Naive thymus-derived CD4-positive, alpha-beta T cell (primary cell): ENCODE measurements at regions of chr1 and their contacts with region 1.

Region 1: DNA sequence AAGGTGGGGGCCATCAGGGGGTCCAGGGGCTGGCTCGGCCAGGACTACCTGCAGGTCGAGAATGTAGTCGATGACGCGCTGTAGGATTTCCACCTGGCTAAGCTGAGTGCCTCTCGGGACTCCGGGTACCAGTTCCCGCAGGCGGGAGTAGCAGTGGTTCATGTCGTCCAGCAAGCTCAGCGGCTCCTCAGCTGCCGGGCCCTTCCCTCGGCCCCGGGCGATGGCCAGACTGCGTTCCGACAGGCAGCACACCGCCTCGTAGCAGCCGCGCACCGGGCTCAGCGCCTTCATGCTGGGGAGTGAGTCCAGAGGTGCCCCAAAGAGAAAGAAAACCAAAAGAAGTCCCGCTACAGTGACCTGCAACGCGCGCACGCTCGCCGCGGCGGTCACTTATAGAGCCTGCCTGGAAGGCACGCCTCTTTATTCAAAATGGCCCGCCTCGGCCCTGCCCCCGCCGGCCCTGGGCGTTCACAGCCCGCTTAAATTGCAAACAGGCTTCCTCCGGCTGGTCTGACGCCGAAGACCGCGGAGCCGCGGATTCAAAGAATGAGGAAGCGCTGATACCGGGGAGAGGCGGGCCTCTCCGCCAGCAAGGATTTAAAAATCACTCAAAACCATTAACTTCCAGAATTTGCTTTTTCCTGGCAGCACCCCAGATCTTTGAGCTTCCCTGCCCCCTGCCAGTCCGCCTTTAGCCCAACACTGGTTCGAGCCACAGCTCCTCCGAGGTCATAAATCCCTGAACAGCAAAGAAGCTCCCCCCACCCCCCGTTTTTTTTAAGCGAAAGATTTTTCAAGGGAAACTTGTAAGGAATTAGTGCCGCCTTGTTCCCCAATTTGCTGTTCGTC is at the start of gene ID3:
- DNase-seq: peak; percentile 70 to 96 (median 86)
- ATAC-seq: peak; percentile 77
- H3K4me3 ChIP-seq: peak within 1 kb of the TSS; percentile 94
- H3K4me3 Mint-ChIP-seq: peak within 1 kb of the TSS; percentile 85 to 98 (median 93)
- H3K27ac ChIP-seq: peak within 1 kb of the TSS; percentile 91
- H3K27ac Mint-ChIP-seq: peak within 1 kb of the TSS; percentile 85 to 98 (median 91)
- H3K4me1 ChIP-seq: peaks cover 16 to 41% of the 10 kb centered on the region in 2 donors
- H3K4me1 Mint-ChIP-seq: peaks cover 40 to 80% (median 74%) of the 10 kb centered on the region in 7 donors
- H3K27me3 ChIP-seq: no peaks in the 10 kb centered on the region
- H3K27me3 Mint-ChIP-seq: peaks cover 0 to 46% (median 0%) of the 10 kb centered on the region in 5 donors
- total RNA-seq, gene ID3: 14.8 to 89.4 (median 34.1) TPM

Region 2: DNA sequence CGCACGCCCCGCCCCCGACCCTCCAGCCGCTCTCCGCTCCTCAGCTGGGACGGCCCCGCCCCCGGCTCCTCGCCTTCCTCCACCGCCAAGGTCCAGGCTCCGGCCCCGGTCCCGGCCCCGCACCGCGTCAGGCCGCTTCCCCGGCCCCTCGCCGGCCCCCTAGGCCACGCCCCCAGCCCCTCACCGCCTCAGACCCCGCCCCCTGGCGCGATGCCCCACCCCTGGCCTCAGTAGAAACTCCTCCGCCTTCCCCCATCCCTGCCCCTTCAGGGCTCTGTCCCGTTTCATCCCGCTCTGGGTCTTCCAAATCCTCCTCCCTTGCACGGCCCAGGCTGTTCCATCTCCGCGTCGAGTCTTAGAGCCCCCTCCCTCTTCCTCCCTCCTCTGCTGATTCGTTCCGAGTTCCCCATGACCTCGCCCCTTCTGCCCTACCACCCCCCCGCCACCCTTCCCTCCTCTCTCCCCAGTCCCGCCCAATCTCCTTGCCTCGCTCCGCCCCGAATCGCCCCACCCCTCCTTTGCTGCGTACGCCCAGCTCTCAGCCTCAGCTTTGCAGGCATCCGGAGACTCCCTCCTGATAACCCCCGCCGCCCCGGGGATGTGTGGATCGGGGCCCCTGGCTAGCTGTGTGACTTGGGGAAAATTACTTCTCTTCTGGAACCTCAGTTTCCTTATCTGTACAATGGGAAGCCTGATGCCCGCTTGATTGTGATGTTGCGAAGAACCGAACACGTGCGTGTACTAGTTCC is 74.9 kb before region 1 on chr1:
- CTCF ChIA-PET with region 1: no interaction called
- POLR2A ChIA-PET with region 1: interaction called, 4 read pairs
- intact Hi-C with region 1: loop called in 1 of 2 experiments (anchors 1 kb)
- DNase-seq: peak; percentile 76 to 92 (median 90)
- ATAC-seq: peak; percentile 94
- H3K4me3 ChIP-seq: peak overlapping the region; percentile 67
- H3K4me3 Mint-ChIP-seq: peak overlapping the region; percentile 74 to 97 (median 88)
- H3K27ac ChIP-seq: peak overlapping the region; percentile 63
- H3K27ac Mint-ChIP-seq: peak overlapping the region; percentile 65 to 83 (median 76)
- H3K4me1 ChIP-seq: peaks cover 13% of the 10 kb centered on the region in 2 donors
- H3K4me1 Mint-ChIP-seq: peaks cover 12 to 20% (median 15%) of the 10 kb centered on the region in 7 donors
- H3K27me3 ChIP-seq: no peaks in the 10 kb centered on the region
- H3K27me3 Mint-ChIP-seq: peaks cover 0 to 73% (median 13%) of the 10 kb centered on the region in 5 donors

Region 3: DNA sequence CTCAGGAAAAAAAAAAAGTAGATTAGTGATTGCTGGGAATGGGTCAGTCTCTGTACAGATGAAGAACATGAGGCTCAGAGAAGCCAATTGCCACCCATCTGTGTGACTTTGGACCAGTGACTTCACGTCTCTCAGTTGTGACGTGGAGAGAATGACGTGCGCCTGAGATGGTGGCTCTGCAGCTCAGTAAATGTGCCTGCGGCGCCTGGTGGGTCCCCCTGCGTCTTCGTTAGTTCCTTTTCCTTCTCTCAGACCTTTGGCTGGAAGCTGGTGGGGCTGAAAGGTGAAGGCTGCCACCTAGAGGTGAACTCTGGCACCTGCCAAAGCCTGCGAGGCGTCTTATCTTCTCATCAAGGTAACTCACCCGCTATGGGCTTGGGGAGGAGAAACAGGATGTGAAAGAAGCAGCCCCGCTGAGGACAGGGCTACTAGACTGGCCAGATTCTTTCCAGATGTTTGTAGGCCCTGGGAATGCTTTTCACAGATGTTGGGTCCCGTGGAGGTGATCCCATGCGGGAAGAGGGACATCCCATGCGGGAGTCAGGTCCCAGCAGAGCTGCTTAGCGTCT is 19.6 kb before region 1 on chr1:
- CTCF ChIA-PET with region 1: interaction called, 61 read pairs
- POLR2A ChIA-PET with region 1: interaction called, 52 read pairs
- intact Hi-C with region 1: loop called (anchors 1 kb)
- DNase-seq: peak; percentile 73 to 93 (median 91)
- ATAC-seq: peak; percentile 98
- H3K4me3 ChIP-seq: no peak overlapping the region
- H3K4me3 Mint-ChIP-seq: peak overlapping the region in 9 of 10 donors; percentile 35 to 66 (median 53)
- H3K27ac ChIP-seq: no peak overlapping the region
- H3K27ac Mint-ChIP-seq: peak overlapping the region; percentile 43 to 85 (median 73)
- H3K4me1 ChIP-seq: peaks cover 10 to 11% of the 10 kb centered on the region in 2 donors
- H3K4me1 Mint-ChIP-seq: peaks cover 3 to 23% (median 17%) of the 10 kb centered on the region in 7 donors
- H3K27me3 ChIP-seq: no peaks in the 10 kb centered on the region
- H3K27me3 Mint-ChIP-seq: no peaks in the 10 kb centered on the region

Region 4: GRCh38 chr1:23577056-23578004 is 18.0 kb after region 1 on chr1:
- CTCF ChIA-PET with region 1: interaction called, 5 read pairs
- POLR2A ChIA-PET with region 1: interaction called, 1,267 read pairs
- intact Hi-C with region 1: loop called (anchors 2 kb)
- DNase-seq: peak in 1 of 9 donors; percentile 50
- ATAC-seq: peak; percentile 79
- H3K4me3 ChIP-seq: peak overlapping the region; percentile 25
- H3K4me3 Mint-ChIP-seq: peak overlapping the region; percentile 41 to 72 (median 62)
- H3K27ac ChIP-seq: peak overlapping the region; percentile 59
- H3K27ac Mint-ChIP-seq: peak overlapping the region; percentile 22 to 97 (median 84)
- H3K4me1 ChIP-seq: peaks cover 6 to 29% of the 10 kb centered on the region in 2 donors
- H3K4me1 Mint-ChIP-seq: peaks cover 12 to 67% (median 53%) of the 10 kb centered on the region in 7 donors
- H3K27me3 ChIP-seq: no peaks in the 10 kb centered on the region
- H3K27me3 Mint-ChIP-seq: no peaks in the 10 kb centered on the region

Region 5: DNA sequence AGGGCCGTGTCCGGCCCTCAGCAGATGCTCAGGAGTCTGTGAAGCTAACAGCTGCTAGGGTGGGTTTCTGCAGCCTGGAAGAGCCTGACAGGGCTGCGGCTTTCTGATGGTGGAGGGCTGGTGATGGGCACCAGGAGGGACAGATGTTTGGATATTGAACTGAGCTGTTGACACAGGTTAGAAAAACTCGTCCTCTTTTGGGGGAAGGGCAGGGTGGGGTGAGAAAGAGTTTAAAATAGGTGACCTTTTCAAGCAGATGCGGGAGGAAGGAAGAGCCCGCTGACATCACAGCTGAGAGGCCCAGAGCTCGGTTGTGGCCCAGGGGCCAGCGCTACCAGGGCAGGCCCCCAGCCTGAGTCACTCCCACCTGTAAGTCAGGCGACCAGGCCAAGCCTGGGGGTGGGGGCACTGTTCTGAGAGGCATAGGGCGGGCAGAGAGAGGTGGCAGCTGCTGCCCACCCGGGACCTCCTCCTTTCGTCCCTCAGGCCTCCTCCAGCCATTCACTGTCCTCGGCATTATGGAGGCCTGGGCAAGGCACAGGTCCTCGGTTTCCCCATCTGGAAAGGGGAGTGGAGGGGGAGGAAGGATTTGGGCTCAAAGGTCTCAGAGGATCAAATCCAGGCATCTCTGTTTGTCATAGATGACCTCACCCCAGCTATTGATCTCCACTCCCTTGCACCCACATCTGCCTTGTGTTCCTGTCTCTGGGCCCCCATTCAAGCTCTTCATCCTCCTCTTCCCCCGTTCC is 32.3 kb after region 1 on chr1:
- CTCF ChIA-PET with region 1: interaction called, 5 read pairs
- POLR2A ChIA-PET with region 1: interaction called, 1,267 read pairs
- intact Hi-C with region 1: loop called in 1 of 2 experiments (anchors 5 kb)
- DNase-seq: peak in 1 of 9 donors; percentile 53
- ATAC-seq: peak; percentile 58
- H3K4me3 ChIP-seq: no peak overlapping the region
- H3K4me3 Mint-ChIP-seq: peak overlapping the region in 9 of 10 donors; percentile 9 to 75 (median 53)
- H3K27ac ChIP-seq: no peak overlapping the region
- H3K27ac Mint-ChIP-seq: peak overlapping the region; percentile 28 to 93 (median 77)
- H3K4me1 ChIP-seq: peaks cover 31 to 46% of the 10 kb centered on the region in 2 donors
- H3K4me1 Mint-ChIP-seq: peaks cover 42 to 83% (median 62%) of the 10 kb centered on the region in 7 donors
- H3K27me3 ChIP-seq: no peaks in the 10 kb centered on the region
- H3K27me3 Mint-ChIP-seq: no peaks in the 10 kb centered on the region

Region 6: GRCh38 chr1:23613191-23614031 is 54.1 kb after region 1 on chr1:
- CTCF ChIA-PET with region 1: interaction called, 32 read pairs
- POLR2A ChIA-PET with region 1: interaction called, 1,267 read pairs
- intact Hi-C with region 1: loop called in 1 of 2 experiments (anchors 2 kb)
- DNase-seq: peak in 8 of 9 donors; percentile 52 to 72 (median 64)
- ATAC-seq: peak; percentile 57
- H3K4me3 ChIP-seq: peak overlapping the region; percentile 14
- H3K4me3 Mint-ChIP-seq: peak overlapping the region; percentile 48 to 84 (median 71)
- H3K27ac ChIP-seq: peak overlapping the region; percentile 71
- H3K27ac Mint-ChIP-seq: peak overlapping the region; percentile 91 to 98 (median 96)
- H3K4me1 ChIP-seq: peaks cover 41 to 68% of the 10 kb centered on the region in 2 donors
- H3K4me1 Mint-ChIP-seq: peaks cover 45 to 88% (median 85%) of the 10 kb centered on the region in 7 donors
- H3K27me3 ChIP-seq: no peaks in the 10 kb centered on the region
- H3K27me3 Mint-ChIP-seq: peaks cover 0 to 2% (median 0%) of the 10 kb centered on the region in 5 donors

Region 7: GRCh38 chr1:23634842-23635651 is 75.7 kb after region 1 on chr1:
- CTCF ChIA-PET with region 1: interaction called, 643 read pairs
- POLR2A ChIA-PET with region 1: interaction called, 559 read pairs
- intact Hi-C with region 1: loop called (anchors 1 kb)
- DNase-seq: peak in 8 of 9 donors; percentile 48 to 80 (median 72)
- ATAC-seq: peak; percentile 91
- H3K4me3 ChIP-seq: peak overlapping the region; percentile 42
- H3K4me3 Mint-ChIP-seq: peak overlapping the region; percentile 64 to 81 (median 75)
- H3K27ac ChIP-seq: peak overlapping the region; percentile 69
- H3K27ac Mint-ChIP-seq: peak overlapping the region; percentile 69 to 97 (median 93)
- H3K4me1 ChIP-seq: peaks cover 0 to 14% of the 10 kb centered on the region in 2 donors
- H3K4me1 Mint-ChIP-seq: peaks cover 18 to 52% (median 40%) of the 10 kb centered on the region in 7 donors
- H3K27me3 ChIP-seq: no peaks in the 10 kb centered on the region
- H3K27me3 Mint-ChIP-seq: peaks cover 0 to 4% (median 0%) of the 10 kb centered on the region in 5 donors